ENCODE measurements at regions of chr6 and their contacts with region 1.

Region 1: DNA sequence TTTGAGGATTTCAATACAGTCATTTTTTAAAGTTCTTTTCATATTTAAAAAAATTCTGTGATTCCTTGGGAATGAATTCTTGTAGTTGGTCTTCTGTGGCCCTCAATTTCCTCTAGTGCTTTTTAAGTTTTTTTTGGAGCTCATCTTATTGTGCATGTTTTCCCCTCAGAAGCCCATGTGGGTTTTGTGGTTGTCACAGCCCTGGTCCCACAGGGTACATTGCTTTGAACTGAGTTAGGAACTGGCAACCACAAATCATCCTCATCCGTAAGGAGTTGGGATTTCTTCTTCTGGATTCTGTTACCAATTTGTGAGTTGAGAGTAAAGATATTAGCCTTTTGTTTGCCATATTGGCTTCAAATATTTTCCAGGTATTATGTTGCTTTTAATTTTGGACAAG is 89.9 kb downstream of the AKAP7 start:
- DNase-seq: no peak
- H3K4me3 Mint-ChIP-seq: no peak overlapping the region
- H3K27ac Mint-ChIP-seq: no peak overlapping the region
- H3K4me1 Mint-ChIP-seq: no peaks in the 10 kb centered on the region
- H3K27me3 Mint-ChIP-seq: no peaks in the 10 kb centered on the region
- CTCF ChIP-seq: no peak

Region 2: GRCh38 chr6:130997061-130997753 is 227.9 kb before region 1 on chr6:
- CTCF ChIA-PET with region 1: no interaction called
- intact Hi-C with region 1: no loop called
- DNase-seq: no peak
- H3K4me3 Mint-ChIP-seq: no peak overlapping the region
- H3K27ac Mint-ChIP-seq: no peak overlapping the region
- H3K4me1 Mint-ChIP-seq: peaks cover 57% of the 10 kb centered on the region
- H3K27me3 Mint-ChIP-seq: no peaks in the 10 kb centered on the region
- CTCF ChIP-seq: no peak

Region 3: DNA sequence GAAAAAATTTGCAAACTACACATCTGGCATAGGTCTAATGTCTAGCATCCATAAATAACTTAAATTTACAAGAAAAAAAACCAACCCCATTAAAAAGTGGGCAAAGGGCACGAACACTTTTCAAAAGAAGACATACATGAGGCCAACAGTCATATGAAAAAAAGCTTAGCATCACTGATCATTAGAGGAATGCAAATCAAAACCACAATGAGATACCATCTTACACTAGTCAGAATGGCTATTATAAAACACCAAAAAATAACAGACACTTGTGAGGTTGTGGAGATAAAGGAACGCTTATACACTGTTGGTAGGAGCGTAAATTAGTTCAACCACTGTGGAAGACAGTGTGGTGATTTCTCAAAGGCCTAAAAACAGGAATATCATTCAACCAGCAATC is 128.3 kb before region 1 on chr6:
- CTCF ChIA-PET with region 1: interaction called, 12 read pairs
- intact Hi-C with region 1: no loop called
- DNase-seq: no peak
- H3K4me3 Mint-ChIP-seq: no peak overlapping the region
- H3K27ac Mint-ChIP-seq: no peak overlapping the region
- H3K4me1 Mint-ChIP-seq: peaks cover 14% of the 10 kb centered on the region
- H3K27me3 Mint-ChIP-seq: no peaks in the 10 kb centered on the region
- CTCF ChIP-seq: no peak

Region 4: DNA sequence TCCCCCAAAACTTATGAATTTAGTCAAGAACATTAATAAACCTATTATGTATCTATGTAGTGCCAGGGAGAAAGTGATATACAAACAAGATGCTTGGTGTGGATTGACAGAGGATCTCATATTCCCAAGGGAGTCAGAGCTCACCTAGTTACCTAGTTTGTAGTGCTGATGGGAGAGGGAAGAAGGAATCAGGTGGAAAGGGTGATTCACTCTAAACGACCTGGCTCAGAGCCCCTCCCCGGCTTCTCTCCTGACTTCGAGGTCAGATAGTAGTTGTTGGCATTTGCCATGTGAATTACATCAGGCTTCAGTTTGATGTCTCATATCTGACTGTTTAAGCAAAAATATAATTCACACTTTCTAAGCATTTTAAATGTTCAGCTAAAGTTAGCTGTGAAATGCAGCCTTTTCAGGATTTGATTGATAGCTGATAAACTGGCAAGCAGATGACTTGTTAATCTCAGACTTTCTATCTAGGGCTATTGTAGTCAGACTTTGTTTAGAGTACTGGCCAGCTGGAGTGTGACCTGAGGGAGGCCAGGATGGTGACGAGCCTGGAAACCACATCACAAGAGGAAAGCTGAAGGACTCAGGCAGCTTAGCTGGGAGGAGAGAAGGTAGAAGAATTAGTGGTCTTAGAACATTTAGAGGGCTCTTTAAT is 33.8 kb after region 1 on chr6:
- CTCF ChIA-PET with region 1: no interaction called
- intact Hi-C with region 1: no loop called
- DNase-seq: peak; percentile 57
- H3K4me3 Mint-ChIP-seq: peak overlapping the region; percentile 1
- H3K27ac Mint-ChIP-seq: peak overlapping the region; percentile 74
- H3K4me1 Mint-ChIP-seq: peaks cover 36% of the 10 kb centered on the region
- H3K27me3 Mint-ChIP-seq: no peaks in the 10 kb centered on the region
- CTCF ChIP-seq: no peak

Region 5: DNA sequence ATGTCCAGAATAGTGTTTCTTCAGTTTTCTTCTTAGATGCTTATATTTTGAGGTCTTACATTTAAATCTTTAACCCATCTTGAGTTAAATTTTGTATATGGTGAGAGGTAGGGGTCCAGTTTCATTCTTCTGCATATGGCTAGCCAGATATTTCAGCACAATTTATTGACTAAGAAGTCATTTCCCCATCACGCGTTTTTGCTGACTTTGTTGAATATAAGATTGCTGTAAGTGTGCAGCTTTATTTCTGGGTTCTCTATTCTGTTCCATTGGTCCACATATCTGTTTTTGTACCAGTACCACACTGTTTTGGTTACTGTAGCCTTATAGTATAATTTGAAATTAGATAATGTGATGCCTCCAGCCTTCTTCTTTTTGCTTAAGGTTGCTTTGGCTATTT is 89.7 kb after region 1 on chr6:
- CTCF ChIA-PET with region 1: no interaction called
- intact Hi-C with region 1: loop called (anchors 5 kb)
- DNase-seq: no peak
- H3K4me3 Mint-ChIP-seq: no peak overlapping the region
- H3K27ac Mint-ChIP-seq: no peak overlapping the region
- H3K4me1 Mint-ChIP-seq: no peaks in the 10 kb centered on the region
- H3K27me3 Mint-ChIP-seq: no peaks in the 10 kb centered on the region
- CTCF ChIP-seq: no peak

Region 6: DNA sequence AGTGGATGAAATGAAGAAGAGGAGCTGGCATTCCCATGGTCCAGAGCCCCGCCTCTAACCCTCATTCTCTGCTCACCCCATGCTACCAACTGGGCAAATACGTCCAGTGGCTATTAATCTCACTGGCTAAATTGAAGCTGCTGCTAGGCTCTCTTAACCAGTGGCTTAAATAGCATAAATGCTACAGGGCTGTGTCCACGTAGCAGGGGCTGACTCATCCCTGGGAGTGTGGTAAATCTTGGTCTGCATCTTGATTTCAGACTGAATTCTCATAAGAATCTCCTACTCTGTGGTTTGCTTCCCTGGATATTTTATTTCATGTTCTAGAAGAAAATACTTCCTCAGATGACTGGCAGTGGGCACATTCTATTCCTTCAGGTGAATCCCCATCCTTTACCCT is 154.8 kb after region 1 on chr6:
- CTCF ChIA-PET with region 1: no interaction called
- intact Hi-C with region 1: no loop called
- DNase-seq: no peak
- H3K4me3 Mint-ChIP-seq: no peak overlapping the region
- H3K27ac Mint-ChIP-seq: no peak overlapping the region
- H3K4me1 Mint-ChIP-seq: no peaks in the 10 kb centered on the region
- H3K27me3 Mint-ChIP-seq: peaks cover 67% of the 10 kb centered on the region
- CTCF ChIP-seq: no peak

Region 7: GRCh38 chr6:131755597-131755996 is 530.5 kb after region 1 on chr6:
- CTCF ChIA-PET with region 1: no interaction called
- intact Hi-C with region 1: no loop called
- DNase-seq: no peak
- H3K4me3 Mint-ChIP-seq: no peak overlapping the region
- H3K27ac Mint-ChIP-seq: no peak overlapping the region
- H3K4me1 Mint-ChIP-seq: no peaks in the 10 kb centered on the region
- H3K27me3 Mint-ChIP-seq: no peaks in the 10 kb centered on the region
- CTCF ChIP-seq: no peak